PC-9 (cell line): ENCODE measurements at regions of chr7 and their contacts with region 1.

Region 1: GRCh38 chr7:130227883-130228575 is 20.4 kb downstream of the SSMEM1 start:
- DNase-seq: no peak
- H3K4me3 ChIP-seq: no peak overlapping the region
- H3K27ac ChIP-seq: no peak overlapping the region
- H3K4me1 ChIP-seq: peaks cover 8% of the 10 kb centered on the region
- H3K27me3 ChIP-seq: no peaks in the 10 kb centered on the region
- CTCF ChIP-seq: no peak

Region 2: DNA sequence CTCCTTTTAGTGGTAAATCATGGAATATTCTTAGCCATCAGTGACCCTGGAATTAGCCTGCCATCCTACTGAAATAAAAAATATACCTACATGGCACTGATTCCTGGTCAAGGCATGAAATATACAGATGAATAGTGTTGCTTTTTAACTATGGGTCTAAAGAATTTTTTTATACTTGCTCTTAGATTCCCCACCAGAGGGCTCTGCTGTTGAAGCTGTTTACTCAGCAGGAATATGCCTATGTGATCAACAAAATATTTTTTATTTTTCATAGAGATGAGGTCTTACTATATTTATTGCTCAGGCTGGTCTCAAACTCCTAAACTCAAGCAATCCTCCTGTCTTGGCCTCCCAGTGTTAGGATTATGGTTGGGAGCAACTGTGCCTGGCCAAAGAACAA is 190.3 kb before region 1 on chr7:
- CTCF ChIA-PET with region 1: interaction called, 10 read pairs
- POLR2A ChIA-PET with region 1: no interaction called
- intact Hi-C with region 1: no loop called
- DNase-seq: no peak
- H3K4me3 ChIP-seq: no peak overlapping the region
- H3K27ac ChIP-seq: no peak overlapping the region
- H3K4me1 ChIP-seq: no peaks in the 10 kb centered on the region
- H3K27me3 ChIP-seq: no peaks in the 10 kb centered on the region
- CTCF ChIP-seq: peak; percentile 68

Region 3: DNA sequence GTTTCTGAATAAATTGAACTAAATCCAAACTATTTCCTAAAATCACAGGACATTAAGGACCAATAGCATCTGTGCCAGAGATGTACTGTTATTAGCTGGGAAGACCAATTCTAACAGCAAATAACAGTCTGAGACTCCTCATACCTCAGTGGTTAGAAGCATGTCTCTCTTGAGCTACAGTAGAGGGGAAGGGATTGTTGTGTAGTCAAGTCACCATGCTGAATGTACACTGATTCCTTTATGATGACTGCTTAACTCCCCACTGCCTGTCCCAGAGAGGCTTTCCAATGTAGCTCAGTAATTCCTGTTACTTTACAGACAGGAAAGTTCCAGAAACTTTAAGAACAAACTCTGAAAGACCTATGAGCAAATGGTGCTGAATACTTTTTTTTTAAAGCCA is 277.7 kb after region 1 on chr7:
- CTCF ChIA-PET with region 1: no interaction called
- POLR2A ChIA-PET with region 1: no interaction called
- intact Hi-C with region 1: no loop called
- DNase-seq: no peak
- H3K4me3 ChIP-seq: no peak overlapping the region
- H3K27ac ChIP-seq: no peak overlapping the region
- H3K4me1 ChIP-seq: no peaks in the 10 kb centered on the region
- H3K27me3 ChIP-seq: no peaks in the 10 kb centered on the region
- CTCF ChIP-seq: no peak